GM12878 (cell line): ENCODE measurements at regions of chr12 and their contacts with region 1.

Region 1: DNA sequence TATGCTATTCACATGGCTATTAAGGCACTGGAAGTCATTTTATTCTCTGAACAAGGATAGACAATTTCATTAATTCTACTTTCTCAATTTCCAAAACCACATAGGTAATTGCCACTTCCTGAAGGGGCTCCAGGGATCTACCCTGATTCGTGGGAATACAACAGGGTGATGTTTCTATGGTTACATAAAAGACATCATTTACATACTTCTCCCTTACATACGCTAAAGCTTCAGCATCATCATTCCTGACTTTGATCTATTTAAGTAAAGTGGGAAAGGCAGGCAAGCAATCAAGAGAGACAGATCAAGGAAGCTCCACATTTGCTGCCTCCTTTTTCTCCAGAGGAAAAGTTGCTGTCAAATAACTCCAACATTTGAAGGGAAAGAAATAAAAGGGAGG is 118.8 kb upstream of the SINHCAF start:
- DNase-seq: no peak
- ATAC-seq: no peak
- H3K4me3 ChIP-seq: no peak overlapping the region
- H3K27ac ChIP-seq: no peak overlapping the region
- H3K4me1 ChIP-seq: no peaks in the 10 kb centered on the region
- H3K27me3 ChIP-seq: no peaks in the 10 kb centered on the region
- CTCF ChIP-seq: no peak
- EP300 ChIP-seq: no peak
- POLR2A ChIP-seq: no peak
- RAD21 ChIP-seq: no peak

Region 2: GRCh38 chr12:31504625-31505222 is 60.0 kb after region 1 on chr12:
- CTCF ChIA-PET with region 1: no interaction called
- POLR2A ChIA-PET with region 1: no interaction called
- RAD21 ChIA-PET with region 1: no interaction called
- SMC1A ChIA-PET with region 1: no interaction called
- in situ Hi-C with region 1: no loop called
- intact Hi-C with region 1: loop called (anchors 5 kb)
- DNase-seq: no peak
- ATAC-seq: no peak
- H3K4me3 ChIP-seq: no peak overlapping the region
- H3K27ac ChIP-seq: no peak overlapping the region
- H3K4me1 ChIP-seq: no peaks in the 10 kb centered on the region
- H3K27me3 ChIP-seq: no peaks in the 10 kb centered on the region
- CTCF ChIP-seq: no peak
- EP300 ChIP-seq: no peak
- POLR2A ChIP-seq: no peak
- RAD21 ChIP-seq: no peak

Region 3: GRCh38 chr12:31558521-31558920 is 113.8 kb after region 1 on chr12:
- CTCF ChIA-PET with region 1: no interaction called
- POLR2A ChIA-PET with region 1: no interaction called
- RAD21 ChIA-PET with region 1: no interaction called
- SMC1A ChIA-PET with region 1: no interaction called
- in situ Hi-C with region 1: no loop called
- intact Hi-C with region 1: no loop called
- DNase-seq: no peak
- ATAC-seq: no peak
- H3K4me3 ChIP-seq: no peak overlapping the region
- H3K27ac ChIP-seq: no peak overlapping the region
- H3K4me1 ChIP-seq: peaks cover 11% of the 10 kb centered on the region
- H3K27me3 ChIP-seq: no peaks in the 10 kb centered on the region
- CTCF ChIP-seq: no peak
- EP300 ChIP-seq: no peak
- POLR2A ChIP-seq: no peak
- RAD21 ChIP-seq: no peak